Activated CD8-positive, alpha-beta memory T cell treated with anti-CD3 and anti-CD28 coated beads, Interleukin-2, amount 10 ng/mL, durations not matched to agents 7 days and 5 days (primary cell): ENCODE measurements at regions of chr1 and their contacts with region 1.

Region 1: DNA sequence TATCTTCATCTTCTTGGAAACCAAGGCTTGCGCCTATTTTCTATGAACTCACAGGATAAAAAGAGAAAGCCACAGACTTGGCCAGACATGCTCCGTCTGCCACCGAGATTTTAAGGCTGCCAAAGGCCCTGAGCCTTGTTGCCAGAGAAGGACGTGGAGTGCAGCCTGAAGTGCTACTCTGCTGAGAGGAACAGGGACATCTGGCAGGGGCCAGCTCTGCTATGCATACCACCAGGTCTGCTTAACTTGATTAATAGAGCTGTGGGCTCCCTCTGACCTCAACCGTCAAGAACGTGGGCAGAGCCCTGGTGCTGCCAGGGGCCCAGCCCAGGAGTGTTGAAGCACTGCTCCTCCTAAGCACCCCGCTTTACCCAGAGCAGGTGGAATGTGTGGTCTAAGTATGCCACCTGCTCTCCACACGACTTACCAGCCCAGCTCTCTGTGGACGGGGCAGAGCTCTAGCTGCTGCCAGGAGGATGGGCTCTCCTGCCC is 10.5 kb downstream of the HCRTR1 start:
- DNase-seq: no peak
- ATAC-seq: no peak
- H3K4me3 Mint-ChIP-seq: no peak overlapping the region
- H3K27ac Mint-ChIP-seq: no peak overlapping the region
- H3K4me1 Mint-ChIP-seq: peaks cover 13% of the 10 kb centered on the region
- H3K27me3 Mint-ChIP-seq: no peaks in the 10 kb centered on the region

Region 2: GRCh38 chr1:31335007-31335406 is 293.0 kb before region 1 on chr1:
- CTCF ChIA-PET with region 1: no interaction called
- DNase-seq: no peak
- ATAC-seq: peak; percentile 39
- H3K4me3 Mint-ChIP-seq: no peak overlapping the region
- H3K27ac Mint-ChIP-seq: no peak overlapping the region
- H3K4me1 Mint-ChIP-seq: no peaks in the 10 kb centered on the region
- H3K27me3 Mint-ChIP-seq: no peaks in the 10 kb centered on the region

Region 3: DNA sequence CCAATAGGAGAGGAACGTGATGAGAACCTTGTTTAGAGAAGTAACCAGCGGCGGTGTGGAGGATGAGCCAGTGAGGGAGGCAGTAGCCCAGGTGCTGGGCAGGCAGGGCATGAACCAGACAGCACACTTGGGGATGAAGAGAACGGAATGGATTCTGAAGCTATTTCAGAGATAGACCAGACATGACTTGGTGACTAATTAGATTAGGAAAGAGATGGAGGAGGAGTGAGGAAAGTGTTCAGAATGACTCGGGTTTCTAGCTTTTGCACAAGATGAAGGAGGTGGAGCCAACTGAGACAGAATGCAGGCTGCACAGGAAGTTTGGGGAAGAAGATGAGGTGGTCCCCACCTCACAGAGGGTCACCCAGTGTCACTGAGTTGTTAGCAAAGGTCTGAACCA is 11.6 kb after region 1 on chr1:
- CTCF ChIA-PET with region 1: interaction called, 13 read pairs
- DNase-seq: no peak
- ATAC-seq: no peak
- H3K4me3 Mint-ChIP-seq: no peak overlapping the region
- H3K27ac Mint-ChIP-seq: no peak overlapping the region
- H3K4me1 Mint-ChIP-seq: peaks cover 28% of the 10 kb centered on the region
- H3K27me3 Mint-ChIP-seq: no peaks in the 10 kb centered on the region

Region 4: DNA sequence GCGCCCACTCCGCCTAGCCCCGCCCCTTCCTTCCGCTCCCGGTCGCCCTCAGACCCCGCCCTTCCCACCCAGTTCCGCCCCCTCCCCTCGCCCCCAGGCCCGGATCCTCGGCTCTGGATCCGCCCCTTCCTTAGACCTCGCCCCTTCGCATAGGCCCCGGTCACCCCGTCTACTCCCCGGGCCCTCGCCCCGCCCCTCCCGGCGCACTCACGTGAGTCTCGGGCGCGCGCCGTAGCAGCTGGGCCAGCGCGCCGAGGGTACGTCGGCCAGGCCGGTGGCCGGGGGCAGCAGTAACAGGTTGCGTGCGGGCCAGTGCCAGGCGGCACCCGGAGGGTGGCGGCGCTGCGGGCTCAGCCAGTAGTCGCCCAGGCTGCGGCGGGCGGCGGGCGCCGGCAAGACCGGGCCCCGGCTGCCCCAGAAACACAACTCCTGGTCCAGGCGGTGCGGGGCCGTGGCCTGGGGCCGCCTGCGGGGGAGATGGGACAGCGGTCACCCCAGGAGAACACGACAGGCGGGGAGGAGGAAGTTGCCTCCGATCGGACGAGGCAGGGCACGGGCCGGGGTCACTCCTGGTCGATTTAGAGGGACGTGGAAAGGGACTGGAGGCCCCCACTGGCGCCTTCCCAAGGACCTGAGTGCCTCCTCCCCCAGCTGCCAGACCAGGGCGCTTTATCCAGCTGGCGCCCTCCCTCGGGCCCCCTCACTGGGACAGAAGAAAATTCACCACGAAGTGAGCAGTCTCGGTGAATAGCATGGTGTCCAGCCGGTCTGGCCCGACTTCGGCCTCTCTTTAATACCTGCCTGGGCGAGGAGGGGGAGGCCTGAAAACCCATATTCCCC is 723.6 kb after region 1 on chr1:
- CTCF ChIA-PET with region 1: no interaction called
- DNase-seq: peak; percentile 93
- ATAC-seq: peak; percentile 96
- H3K4me3 Mint-ChIP-seq: peak overlapping the region; percentile 74
- H3K27ac Mint-ChIP-seq: peak overlapping the region; percentile 77
- H3K4me1 Mint-ChIP-seq: peaks cover 35% of the 10 kb centered on the region
- H3K27me3 Mint-ChIP-seq: peaks cover 2% of the 10 kb centered on the region